Activated CD4-positive, alpha-beta T cell treated with anti-CD3 and anti-CD28 coated beads for 36 hours (primary cell): ENCODE measurements at regions of chr16 and their contacts with region 1.

Region 1: DNA sequence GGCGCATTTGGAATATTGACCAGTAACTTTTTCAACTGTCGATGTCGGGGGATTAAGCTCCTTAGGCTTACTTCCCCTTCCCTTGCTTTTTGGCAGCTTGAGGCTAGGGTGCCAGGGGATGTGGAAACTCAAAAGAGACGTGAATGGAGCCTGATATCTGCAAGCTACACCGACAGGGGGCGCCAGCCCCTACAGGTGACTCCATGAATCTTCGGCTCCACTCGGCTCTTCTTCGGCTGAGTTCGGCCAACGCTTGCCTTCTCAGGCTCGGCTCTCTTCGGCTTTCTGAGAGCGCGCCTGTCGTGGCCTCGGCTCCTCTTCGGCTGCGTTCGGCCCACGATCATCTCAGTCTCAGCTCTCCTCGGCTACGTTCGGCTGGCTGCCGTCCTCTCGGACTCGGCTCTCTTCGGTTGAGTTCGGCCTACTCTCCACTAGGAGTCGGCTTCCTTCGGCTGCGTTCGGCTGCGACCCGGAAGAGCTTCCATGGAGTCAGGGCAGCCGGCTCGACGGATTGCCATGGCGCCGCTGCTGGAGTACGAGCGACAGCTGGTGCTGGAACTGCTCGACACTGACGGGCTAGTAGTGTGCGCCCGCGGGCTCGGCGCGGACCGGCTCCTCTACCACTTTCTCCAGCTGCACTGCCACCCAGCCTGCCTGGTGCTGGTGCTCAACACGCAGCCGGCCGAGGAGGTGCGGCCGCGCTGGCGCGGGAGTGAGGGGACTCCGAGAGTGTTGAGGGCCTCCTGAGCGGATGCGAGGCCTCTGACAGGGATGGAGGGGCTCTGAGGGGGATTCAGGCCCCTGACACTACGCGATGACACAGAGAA is at the start of gene ERCC4:
- DNase-seq: peak; percentile 99
- ATAC-seq: peak; percentile 99
- H3K4me3 Mint-ChIP-seq: peak within 1 kb of the TSS; percentile 94
- H3K27ac Mint-ChIP-seq: peak within 1 kb of the TSS; percentile 84
- H3K4me1 Mint-ChIP-seq: peaks cover 19% of the 10 kb centered on the region
- H3K27me3 Mint-ChIP-seq: no peaks in the 10 kb centered on the region
- total RNA-seq, gene ERCC4: 11.5 to 13.9 TPM

Region 2: GRCh38 chr16:13866073-13866472 is 53.8 kb before region 1 on chr16:
- CTCF ChIA-PET with region 1: interaction called, 13 read pairs
- POLR2A ChIA-PET with region 1: no interaction called
- intact Hi-C with region 1: loop called in 1 of 2 experiments (anchors 1 kb)
- DNase-seq: peak; percentile 76
- ATAC-seq: peak; percentile 84
- H3K4me3 Mint-ChIP-seq: no peak overlapping the region
- H3K27ac Mint-ChIP-seq: no peak overlapping the region
- H3K4me1 Mint-ChIP-seq: no peaks in the 10 kb centered on the region
- H3K27me3 Mint-ChIP-seq: peaks cover 19% of the 10 kb centered on the region

Region 3: DNA sequence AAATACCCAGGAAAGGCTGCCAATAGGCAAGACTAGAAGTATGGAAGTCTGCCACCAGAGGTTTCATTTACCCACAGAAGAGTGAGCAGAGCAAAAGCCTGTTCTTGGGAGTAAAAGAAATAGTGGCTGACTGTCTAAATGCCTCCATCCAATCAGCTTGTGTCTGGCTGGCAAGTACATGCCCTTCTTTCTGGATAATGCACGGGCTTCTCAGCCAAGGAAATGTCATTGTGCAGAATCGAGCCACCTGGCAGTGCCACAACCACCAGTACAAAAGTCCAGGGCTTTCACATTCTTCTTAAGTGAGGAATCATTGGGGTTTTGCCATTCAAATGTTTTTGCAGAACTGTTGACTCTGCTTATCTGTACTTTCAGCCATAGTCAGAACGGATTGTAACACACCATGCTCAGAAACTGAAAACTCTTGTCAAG is 10.0 kb before region 1 on chr16:
- CTCF ChIA-PET with region 1: interaction called, 13 read pairs
- POLR2A ChIA-PET with region 1: no interaction called
- intact Hi-C with region 1: no loop called
- DNase-seq: no peak
- ATAC-seq: no peak
- H3K4me3 Mint-ChIP-seq: no peak overlapping the region
- H3K27ac Mint-ChIP-seq: no peak overlapping the region
- H3K4me1 Mint-ChIP-seq: no peaks in the 10 kb centered on the region
- H3K27me3 Mint-ChIP-seq: peaks cover 26% of the 10 kb centered on the region

Region 4: DNA sequence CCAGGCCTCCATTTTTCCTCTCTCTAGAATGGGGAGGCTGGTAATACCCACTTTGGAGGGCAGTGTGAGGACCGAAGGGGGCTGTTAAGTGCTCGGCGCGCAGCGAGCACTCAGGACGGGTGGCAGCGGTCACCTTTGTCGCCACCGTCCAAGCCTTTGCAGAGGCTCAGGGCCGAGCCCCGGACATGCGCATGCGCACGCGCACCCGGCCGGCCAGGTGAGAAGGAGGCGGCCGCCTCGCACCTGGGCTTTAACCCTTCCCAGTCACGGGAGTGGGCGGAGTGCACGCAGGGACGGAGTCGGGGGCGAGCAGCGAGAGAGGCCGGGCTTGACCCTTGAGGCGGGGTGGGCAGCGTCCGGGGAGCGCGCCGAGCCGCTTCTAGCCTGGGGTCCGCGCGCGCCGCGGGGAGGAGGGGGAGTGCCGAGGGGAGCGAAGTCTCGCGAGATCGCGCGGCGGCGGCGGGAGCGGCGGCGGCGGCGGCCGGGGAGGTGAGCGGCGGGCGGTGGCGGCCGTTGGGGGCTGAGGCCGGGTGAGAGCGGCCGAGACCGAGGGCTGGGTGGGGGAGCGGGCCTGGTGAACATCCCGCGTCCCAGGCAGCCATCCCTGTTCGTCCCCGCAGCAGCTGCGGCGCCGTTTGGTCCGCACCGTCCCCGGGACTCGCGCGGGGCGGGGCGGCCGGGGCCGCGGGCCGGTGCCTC is 151.1 kb after region 1 on chr16 and contains the start of gene MRTFB:
- CTCF ChIA-PET with region 1: interaction called, 6 read pairs
- POLR2A ChIA-PET with region 1: no interaction called
- intact Hi-C with region 1: loop called (anchors 1 to 5 kb)
- DNase-seq: peak; percentile 89
- ATAC-seq: peak; percentile 89
- H3K4me3 Mint-ChIP-seq: peak within 1 kb of the TSS; percentile 82
- H3K27ac Mint-ChIP-seq: peak within 1 kb of the TSS; percentile 81
- H3K4me1 Mint-ChIP-seq: peaks cover 14% of the 10 kb centered on the region
- H3K27me3 Mint-ChIP-seq: peaks cover 3% of the 10 kb centered on the region
- total RNA-seq, gene MRTFB: 9.6 to 16.9 TPM

Region 5: GRCh38 chr16:14249291-14250032 is 329.6 kb after region 1 on chr16:
- CTCF ChIA-PET with region 1: interaction called, 16 read pairs
- POLR2A ChIA-PET with region 1: no interaction called
- intact Hi-C with region 1: loop called (anchors 1 to 10 kb)
- DNase-seq: peak; percentile 65
- ATAC-seq: no peak
- H3K4me3 Mint-ChIP-seq: no peak overlapping the region
- H3K27ac Mint-ChIP-seq: peak overlapping the region; percentile 26
- H3K4me1 Mint-ChIP-seq: peaks cover 4% of the 10 kb centered on the region
- H3K27me3 Mint-ChIP-seq: no peaks in the 10 kb centered on the region

Region 6: DNA sequence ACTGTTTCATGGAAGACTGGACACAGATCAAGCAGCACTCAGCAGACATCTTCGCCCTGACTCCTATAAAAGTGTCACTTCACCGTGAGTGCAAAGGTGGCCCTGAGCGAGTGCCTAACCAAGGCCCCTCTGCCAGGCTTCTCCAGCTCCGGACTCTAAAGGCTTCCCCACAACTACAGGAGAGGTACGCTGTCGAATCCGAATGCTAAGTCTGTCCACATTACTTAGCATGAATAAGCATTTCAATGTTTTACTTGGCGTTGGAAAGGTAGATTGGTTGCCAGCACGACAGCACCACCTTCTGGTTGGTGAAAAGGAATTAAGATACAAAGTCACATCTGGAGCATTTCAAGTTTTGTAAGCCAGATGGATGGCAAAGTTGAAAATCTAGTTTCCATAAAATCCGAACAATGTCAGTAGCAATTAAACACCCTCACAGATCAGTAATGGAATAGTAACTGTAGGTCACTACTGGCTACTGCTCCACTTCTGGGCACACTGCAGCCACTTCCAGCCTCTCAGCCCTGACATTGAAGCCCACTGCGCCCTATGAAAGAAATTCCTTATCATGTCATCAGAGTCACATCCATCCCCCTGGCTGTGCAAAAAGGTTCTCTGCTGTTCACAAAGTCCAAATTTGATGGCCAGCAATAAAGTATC is 609.2 kb after region 1 on chr16:
- CTCF ChIA-PET with region 1: interaction called, 4 read pairs
- POLR2A ChIA-PET with region 1: no interaction called
- intact Hi-C with region 1: loop called (anchors 2 to 5 kb)
- DNase-seq: peak; percentile 74
- ATAC-seq: peak; percentile 58
- H3K4me3 Mint-ChIP-seq: no peak overlapping the region
- H3K27ac Mint-ChIP-seq: no peak overlapping the region
- H3K4me1 Mint-ChIP-seq: no peaks in the 10 kb centered on the region
- H3K27me3 Mint-ChIP-seq: no peaks in the 10 kb centered on the region